Activated CD4-positive, alpha-beta T cell treated with anti-CD3 and anti-CD28 coated beads for 36 hours (primary cell): ENCODE measurements at regions of chr2 and their contacts with region 1.

Region 1: DNA sequence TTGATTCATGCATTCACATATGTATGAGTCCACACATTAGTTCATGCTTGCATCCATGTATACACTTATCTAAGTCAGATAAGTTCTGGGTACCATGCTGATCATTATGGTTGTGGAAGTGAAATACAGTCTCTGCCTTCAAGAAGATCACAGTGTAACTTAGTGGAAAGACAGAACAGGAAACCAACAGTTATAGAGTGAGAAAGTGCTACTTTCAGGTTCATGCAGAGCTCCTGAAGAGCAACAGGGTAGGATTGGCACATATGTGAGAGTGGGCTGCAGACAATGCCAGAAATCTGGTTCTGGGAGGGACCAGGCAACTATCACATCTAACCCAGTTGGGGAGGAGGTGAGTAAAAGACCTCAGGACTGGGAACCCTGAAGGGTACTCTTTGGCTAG is 35.4 kb upstream of the PGAP1 start:
- DNase-seq: peak; percentile 22
- ATAC-seq: peak; percentile 89
- H3K4me3 Mint-ChIP-seq: no peak overlapping the region
- H3K27ac Mint-ChIP-seq: peak overlapping the region; percentile 58
- H3K4me1 Mint-ChIP-seq: peaks cover 31% of the 10 kb centered on the region
- H3K27me3 Mint-ChIP-seq: no peaks in the 10 kb centered on the region

Region 2: GRCh38 chr2:196987649-196988364 is 25.9 kb after region 1 on chr2:
- CTCF ChIA-PET with region 1: interaction called, 5 read pairs
- POLR2A ChIA-PET with region 1: interaction called, 5 read pairs
- intact Hi-C with region 1: loop called (anchors 1 kb)
- DNase-seq: peak; percentile 62
- ATAC-seq: peak; percentile 93
- H3K4me3 Mint-ChIP-seq: peak overlapping the region; percentile 38
- H3K27ac Mint-ChIP-seq: peak overlapping the region; percentile 98
- H3K4me1 Mint-ChIP-seq: peaks cover 65% of the 10 kb centered on the region
- H3K27me3 Mint-ChIP-seq: no peaks in the 10 kb centered on the region